Ovary (tissue), 10 donors: ENCODE measurements at regions of chr2 and their contacts with region 1.

Region 1: GRCh38 chr2:42928692-42929545 is 136.5 kb upstream of the HAAO start:
- DNase-seq: peak in 1 of 5 donors; percentile 36
- H3K4me3 ChIP-seq: no peak overlapping the region
- H3K27ac ChIP-seq: peak overlapping the region; percentile 49 to 74
- H3K4me1 ChIP-seq: peaks cover 65% of the 10 kb centered on the region
- H3K27me3 ChIP-seq: no peaks in the 10 kb centered on the region
- CTCF ChIP-seq: no peak
- EP300 ChIP-seq: no peak
- POLR2A ChIP-seq: no peak

Region 2: DNA sequence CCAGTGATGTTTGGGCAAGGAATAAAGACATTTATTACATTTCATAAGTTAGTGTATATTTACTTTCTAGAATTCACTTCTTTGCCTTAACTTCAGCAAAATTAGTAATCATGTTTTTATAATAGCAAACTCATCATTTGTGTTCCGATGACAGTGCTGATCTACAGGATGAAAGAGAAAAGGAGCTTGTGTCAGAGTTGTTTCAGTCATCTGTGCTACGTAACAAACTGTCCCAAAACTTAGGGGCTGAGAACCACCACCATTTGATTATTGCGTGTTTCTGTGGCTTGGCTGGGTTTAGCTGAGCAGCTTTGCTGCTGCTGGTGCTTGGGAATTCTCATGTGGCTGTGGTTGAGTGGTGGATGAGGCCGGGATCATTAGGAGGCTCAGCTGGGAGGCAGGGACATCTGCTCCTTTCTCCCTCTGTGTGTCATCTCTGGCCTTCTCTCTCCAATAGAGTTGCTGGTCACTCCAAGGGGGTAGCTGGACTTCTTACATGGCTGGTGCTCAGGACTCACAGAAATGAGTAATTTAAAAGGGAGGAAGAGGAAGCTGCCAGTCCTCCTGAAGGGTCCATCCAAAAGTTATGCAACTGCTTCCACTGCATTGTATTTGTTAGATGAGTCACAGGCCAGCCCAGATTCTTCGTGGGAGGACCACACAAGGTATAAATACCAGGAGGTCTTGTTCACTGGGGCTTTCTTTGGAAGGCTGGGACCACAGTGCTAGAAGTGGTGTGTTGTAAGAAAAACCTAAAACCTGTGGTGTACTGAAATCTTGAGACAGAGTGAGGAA is 93.1 kb before region 1 on chr2:
- intact Hi-C with region 1: loop called in 2 of 4 experiments (anchors 5 to 10 kb)
- DNase-seq: peak in 3 of 5 donors; percentile 17 to 74 (median 56)
- H3K4me3 ChIP-seq: no peak overlapping the region
- H3K27ac ChIP-seq: peak overlapping the region in 1 of 2 donors; percentile 35
- H3K4me1 ChIP-seq: peaks cover 8% of the 10 kb centered on the region
- H3K27me3 ChIP-seq: no peaks in the 10 kb centered on the region
- CTCF ChIP-seq: no peak
- EP300 ChIP-seq: no peak
- POLR2A ChIP-seq: no peak

Region 3: DNA sequence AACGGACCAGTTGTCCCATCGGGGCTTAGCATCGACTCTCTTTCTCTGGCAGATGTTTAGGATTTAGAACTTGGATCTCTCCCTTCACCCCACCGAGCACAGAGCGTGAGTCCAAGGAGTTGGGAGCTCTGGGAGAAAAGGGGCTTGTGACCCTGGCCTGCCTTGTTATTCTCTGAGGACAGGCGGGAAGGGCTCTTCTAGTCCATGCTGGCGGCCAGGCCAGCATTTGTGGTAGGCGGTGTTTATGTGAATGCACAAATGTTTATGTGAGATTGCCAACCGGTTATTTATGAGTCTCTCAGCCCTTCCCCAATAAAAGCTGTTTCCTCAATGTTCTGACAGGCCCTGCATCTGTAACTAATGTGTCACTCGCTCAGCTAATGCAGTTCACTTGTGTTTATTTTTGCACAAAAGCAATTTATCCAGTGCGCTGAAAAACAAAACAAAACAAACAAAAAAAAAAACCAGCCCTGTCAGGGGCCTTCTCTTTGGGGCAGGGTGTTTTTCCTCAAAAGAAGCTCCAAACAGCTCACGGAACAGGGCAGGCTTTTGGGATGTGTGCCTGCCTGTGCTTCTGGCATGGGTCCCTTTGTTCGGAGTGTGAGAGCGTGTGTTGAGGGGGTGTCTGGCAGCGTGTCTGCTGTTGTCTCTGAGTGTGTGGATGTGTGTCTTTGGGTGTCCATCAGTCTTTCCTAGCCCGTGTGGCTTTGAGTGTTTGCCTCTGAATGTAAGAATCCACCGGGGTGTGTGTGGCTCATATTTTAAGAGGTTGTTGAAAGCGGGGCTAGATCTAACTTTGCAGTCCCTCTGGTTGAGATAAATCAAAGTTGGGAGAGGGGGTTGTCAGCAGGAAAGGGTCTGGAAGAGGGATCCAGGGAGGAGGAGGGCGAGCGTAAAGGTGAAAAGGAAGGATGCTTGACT is 83.8 kb before region 1 on chr2:
- intact Hi-C with region 1: loop called in 2 of 4 experiments (anchors 5 kb)
- DNase-seq: peak; percentile 61 to 79 (median 73)
- H3K4me3 ChIP-seq: no peak overlapping the region
- H3K27ac ChIP-seq: peak overlapping the region in 1 of 2 donors; percentile 75
- H3K4me1 ChIP-seq: peaks cover 24% of the 10 kb centered on the region
- H3K27me3 ChIP-seq: no peaks in the 10 kb centered on the region
- CTCF ChIP-seq: no peak
- EP300 ChIP-seq: no peak
- POLR2A ChIP-seq: no peak

Region 4: GRCh38 chr2:42865884-42866881 is 62.7 kb before region 1 on chr2:
- intact Hi-C with region 1: loop called in 3 of 4 experiments (anchors 10 kb)
- DNase-seq: no peak
- H3K4me3 ChIP-seq: no peak overlapping the region
- H3K27ac ChIP-seq: no peak overlapping the region
- H3K4me1 ChIP-seq: no peaks in the 10 kb centered on the region
- H3K27me3 ChIP-seq: no peaks in the 10 kb centered on the region
- CTCF ChIP-seq: no peak
- EP300 ChIP-seq: no peak
- POLR2A ChIP-seq: no peak

Region 5: GRCh38 chr2:42878581-42878980 is 50.3 kb before region 1 on chr2:
- intact Hi-C with region 1: loop called in 2 of 4 experiments (anchors 10 kb)
- DNase-seq: no peak
- H3K4me3 ChIP-seq: no peak overlapping the region
- H3K27ac ChIP-seq: peak overlapping the region in 1 of 2 donors; percentile 81
- H3K4me1 ChIP-seq: peaks cover 31% of the 10 kb centered on the region
- H3K27me3 ChIP-seq: no peaks in the 10 kb centered on the region
- CTCF ChIP-seq: no peak
- EP300 ChIP-seq: no peak
- POLR2A ChIP-seq: no peak

Region 6: DNA sequence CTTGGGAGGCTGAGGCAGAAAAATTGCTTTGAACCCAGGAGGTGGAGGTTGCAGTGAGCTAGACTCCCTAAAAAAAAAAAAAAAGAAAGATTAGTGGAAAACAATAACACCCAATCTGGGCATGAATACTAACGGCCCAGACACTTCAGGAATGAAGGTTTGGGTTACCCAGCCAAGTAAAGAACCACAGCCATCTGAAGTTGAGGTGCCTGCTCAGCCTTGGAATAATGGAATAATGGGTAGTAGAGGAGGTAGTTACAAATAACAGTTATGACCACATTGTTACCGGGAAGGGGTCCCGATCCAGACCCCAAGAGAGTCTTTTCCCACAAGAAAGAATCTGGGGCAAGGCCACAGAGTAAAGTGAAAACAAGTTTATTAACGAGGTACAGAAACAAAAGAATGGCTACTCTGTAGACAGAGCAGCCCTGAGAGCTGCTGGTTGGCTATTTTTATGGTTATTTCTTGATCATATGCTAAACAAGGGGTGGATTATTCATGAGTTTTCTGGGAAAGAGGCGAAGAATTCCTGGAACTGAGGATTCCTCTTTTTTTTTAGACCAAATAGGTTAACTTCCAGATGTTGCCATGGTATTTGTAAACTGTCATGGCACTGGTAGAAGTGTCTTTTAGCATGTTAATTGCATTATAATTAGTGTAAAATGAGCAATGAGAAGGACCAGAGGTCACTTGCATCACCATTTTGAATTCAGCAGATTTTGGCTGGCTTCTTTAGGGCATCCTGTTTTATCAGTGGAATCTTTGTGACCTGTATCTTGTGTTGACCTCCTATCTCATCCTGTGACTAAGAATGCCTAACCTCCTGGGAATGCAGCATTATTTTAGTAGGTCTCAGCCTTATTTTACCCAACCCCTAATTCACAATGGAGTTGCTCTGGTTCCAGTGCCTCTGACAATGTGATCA is 40.3 kb before region 1 on chr2:
- intact Hi-C with region 1: no loop called
- DNase-seq: no peak
- H3K4me3 ChIP-seq: no peak overlapping the region
- H3K27ac ChIP-seq: no peak overlapping the region
- H3K4me1 ChIP-seq: no peaks in the 10 kb centered on the region
- H3K27me3 ChIP-seq: no peaks in the 10 kb centered on the region
- CTCF ChIP-seq: no peak
- EP300 ChIP-seq: no peak
- POLR2A ChIP-seq: no peak

Region 7: DNA sequence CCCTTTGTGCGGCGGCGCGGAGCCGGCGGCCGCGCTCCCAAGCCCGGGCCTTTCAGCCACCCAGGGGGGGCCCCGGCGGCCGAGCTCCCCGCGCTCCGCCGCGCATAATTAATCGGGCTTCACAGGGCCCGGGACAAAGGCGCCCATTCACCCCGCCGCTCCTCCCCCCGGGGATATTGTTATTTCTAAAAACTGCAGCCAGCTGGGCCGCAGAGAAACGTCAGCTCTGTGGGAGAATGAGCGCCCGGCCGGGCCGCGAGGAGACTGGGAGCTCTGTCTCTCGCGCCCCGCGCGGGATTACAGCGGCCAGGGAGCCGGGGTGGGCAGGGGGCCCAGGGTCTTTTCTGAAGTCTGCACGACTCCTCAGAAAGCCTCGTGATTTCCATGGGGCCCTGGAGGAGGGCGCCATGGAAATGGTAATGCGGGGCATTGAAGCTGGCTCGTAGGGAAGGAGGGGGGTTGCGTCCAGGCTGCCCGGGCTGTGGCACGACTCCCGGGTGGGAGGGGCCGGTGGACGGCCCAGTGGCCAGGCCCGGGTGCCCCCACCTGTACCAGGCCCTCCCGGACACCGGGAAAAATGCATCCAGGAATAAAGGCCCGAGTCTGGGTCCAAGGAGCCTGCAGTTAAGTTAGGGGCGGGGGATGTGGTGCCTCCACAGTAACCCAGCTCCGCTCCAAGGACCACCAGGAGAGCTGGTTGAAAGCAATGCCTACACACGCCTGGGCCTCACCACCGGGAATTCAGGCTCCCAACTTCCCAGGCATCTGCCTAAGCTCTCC is 172.2 kb after region 1 on chr2:
- intact Hi-C with region 1: no loop called
- DNase-seq: peak; percentile 57 to 82 (median 69)
- H3K4me3 ChIP-seq: peak overlapping the region; percentile 24
- H3K27ac ChIP-seq: peak overlapping the region; percentile 16 to 23
- H3K4me1 ChIP-seq: peaks cover 21% of the 10 kb centered on the region
- H3K27me3 ChIP-seq: no peaks in the 10 kb centered on the region
- CTCF ChIP-seq: no peak
- EP300 ChIP-seq: no peak
- POLR2A ChIP-seq: no peak